ENCODE measurements at regions of chr1 and their contacts with region 1.

Region 1: GRCh38 chr1:111222308-111223125 is 5.0 kb upstream of the CHI3L2 start:
- DNase-seq: peak; percentile 90
- H3K4me3 Mint-ChIP-seq: peak overlapping the region; percentile 53
- H3K27ac Mint-ChIP-seq: peak overlapping the region; percentile 99
- H3K4me1 Mint-ChIP-seq: peaks cover 94% of the 10 kb centered on the region
- H3K27me3 Mint-ChIP-seq: no peaks in the 10 kb centered on the region

Region 2: GRCh38 chr1:111030590-111030989 is 191.9 kb before region 1 on chr1:
- CTCF ChIA-PET with region 1: interaction called, 13 read pairs
- intact Hi-C with region 1: loop called (anchors 2 kb)
- DNase-seq: peak; percentile 77
- H3K4me3 Mint-ChIP-seq: no peak overlapping the region
- H3K27ac Mint-ChIP-seq: no peak overlapping the region
- H3K4me1 Mint-ChIP-seq: no peaks in the 10 kb centered on the region
- H3K27me3 Mint-ChIP-seq: peaks cover 9% of the 10 kb centered on the region

Region 3: DNA sequence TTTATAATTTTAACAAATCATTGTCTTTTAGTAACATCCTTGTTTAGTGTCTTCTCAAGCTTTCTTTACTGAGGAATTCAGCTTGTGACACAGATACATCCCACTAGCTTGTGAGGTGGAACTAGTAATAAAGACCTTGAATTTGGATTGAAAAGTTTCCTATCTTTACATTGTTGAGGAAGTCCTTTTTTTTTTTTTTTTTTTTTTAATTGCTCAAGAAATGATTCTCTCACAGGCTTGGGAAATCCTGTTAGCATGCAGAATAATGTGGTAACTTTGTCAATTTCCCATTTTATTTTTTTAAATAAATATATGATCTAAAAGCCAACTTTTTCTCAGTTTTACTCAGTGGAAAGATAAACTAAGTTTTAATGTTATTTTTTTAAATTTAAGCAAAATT is 37.9 kb before region 1 on chr1:
- CTCF ChIA-PET with region 1: interaction called, 4 read pairs
- intact Hi-C with region 1: loop called (anchors 5 kb)
- DNase-seq: no peak
- H3K4me3 Mint-ChIP-seq: no peak overlapping the region
- H3K27ac Mint-ChIP-seq: peak overlapping the region; percentile 74
- H3K4me1 Mint-ChIP-seq: peaks cover 75% of the 10 kb centered on the region
- H3K27me3 Mint-ChIP-seq: no peaks in the 10 kb centered on the region

Region 4: DNA sequence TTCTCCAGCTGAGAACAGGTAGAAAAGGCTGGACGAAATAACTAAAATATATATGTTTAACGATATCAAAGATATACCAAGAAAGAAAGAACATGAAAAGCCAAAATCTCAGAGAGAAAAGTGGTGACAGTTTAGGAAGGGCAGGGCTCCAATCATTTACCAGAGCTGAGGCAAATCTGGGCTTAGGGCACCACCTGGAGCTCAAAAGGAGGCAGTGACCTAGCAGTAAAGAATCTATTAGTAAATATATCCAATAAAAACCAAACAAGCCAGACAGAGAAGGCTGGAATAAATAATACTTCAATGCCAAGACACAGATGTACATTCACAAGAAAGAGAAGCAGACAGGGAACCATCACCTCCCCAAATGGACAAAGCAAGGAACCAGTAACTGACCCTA is 111.7 kb after region 1 on chr1:
- CTCF ChIA-PET with region 1: interaction called, 54 read pairs
- intact Hi-C with region 1: loop called (anchors 1 kb)
- DNase-seq: peak; percentile 76
- H3K4me3 Mint-ChIP-seq: no peak overlapping the region
- H3K27ac Mint-ChIP-seq: no peak overlapping the region
- H3K4me1 Mint-ChIP-seq: no peaks in the 10 kb centered on the region
- H3K27me3 Mint-ChIP-seq: no peaks in the 10 kb centered on the region

Region 5: DNA sequence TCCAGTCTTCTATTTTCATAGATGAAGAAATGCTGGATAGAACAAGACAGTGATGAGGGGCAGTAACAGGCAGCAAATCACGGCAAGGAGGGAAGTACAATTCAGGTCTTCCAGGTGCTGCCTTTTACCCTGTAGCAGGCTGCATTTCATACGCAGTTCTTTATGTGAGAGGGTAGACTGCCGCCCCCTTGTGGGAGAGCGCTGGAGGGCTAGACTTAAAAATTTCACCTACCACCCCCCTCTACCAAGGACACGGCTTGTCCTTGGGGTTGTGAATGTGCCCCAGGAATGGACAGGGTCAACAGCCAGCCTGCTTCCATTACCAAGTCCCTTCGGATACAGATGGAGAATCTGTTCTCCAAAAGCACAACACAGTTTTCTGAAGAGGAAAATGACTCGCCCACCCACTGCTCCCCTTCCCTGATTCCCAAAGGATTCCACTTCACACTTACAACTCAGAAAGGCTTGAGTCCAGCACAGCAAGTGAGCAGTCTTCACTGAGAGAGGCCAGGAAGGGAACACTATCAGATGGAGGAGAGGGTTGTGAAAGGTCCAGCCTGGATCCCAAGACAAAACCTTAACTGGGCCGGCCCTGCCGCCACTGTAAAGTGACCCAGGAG is 219.2 kb after region 1 on chr1:
- CTCF ChIA-PET with region 1: interaction called, 8 read pairs
- intact Hi-C with region 1: loop called (anchors 1 kb)
- DNase-seq: peak; percentile 78
- H3K4me3 Mint-ChIP-seq: no peak overlapping the region
- H3K27ac Mint-ChIP-seq: peak overlapping the region; percentile 65
- H3K4me1 Mint-ChIP-seq: peaks cover 39% of the 10 kb centered on the region
- H3K27me3 Mint-ChIP-seq: no peaks in the 10 kb centered on the region

Region 6: GRCh38 chr1:111755331-111756123 is 533.0 kb after region 1 on chr1 and contains the start of gene DDX20:
- CTCF ChIA-PET with region 1: no interaction called
- intact Hi-C with region 1: loop called (anchors 2 kb)
- DNase-seq: peak; percentile 95
- H3K4me3 Mint-ChIP-seq: peak within 1 kb of the TSS; percentile 82
- H3K27ac Mint-ChIP-seq: peak within 1 kb of the TSS; percentile 97
- H3K4me1 Mint-ChIP-seq: peaks cover 34% of the 10 kb centered on the region
- H3K27me3 Mint-ChIP-seq: no peaks in the 10 kb centered on the region
- total RNA-seq, gene DDX20: 11.4 to 13.3 TPM

Measured in activated naive CD4-positive, alpha-beta T cell treated with anti-CD3 and anti-CD28 coated beads for 36 hours (primary cell).